ENCODE measurements at regions of chr5 and their contacts with region 1.

Region 1: GRCh38 chr5:132064738-132065331 is 4.4 kb downstream of the IL3 start:
- DNase-seq: peak; percentile 93
- ATAC-seq: peak; percentile 78
- H3K4me3 Mint-ChIP-seq: no peak overlapping the region
- H3K27ac Mint-ChIP-seq: peak overlapping the region; percentile 6
- H3K4me1 Mint-ChIP-seq: peaks cover 34% of the 10 kb centered on the region
- H3K27me3 Mint-ChIP-seq: no peaks in the 10 kb centered on the region
- CTCF ChIP-seq: peak; percentile 92

Region 2: GRCh38 chr5:131810510-131811249 is 254.2 kb before region 1 on chr5:
- CTCF ChIA-PET with region 1: interaction called, 15 read pairs
- POLR2A ChIA-PET with region 1: interaction called, 3 read pairs
- intact Hi-C with region 1: no loop called
- DNase-seq: peak; percentile 28
- ATAC-seq: no peak
- H3K4me3 Mint-ChIP-seq: no peak overlapping the region
- H3K27ac Mint-ChIP-seq: no peak overlapping the region
- H3K4me1 Mint-ChIP-seq: no peaks in the 10 kb centered on the region
- H3K27me3 Mint-ChIP-seq: no peaks in the 10 kb centered on the region
- CTCF ChIP-seq: peak; percentile 22

Region 3: GRCh38 chr5:131926168-131926567 is 138.7 kb before region 1 on chr5:
- CTCF ChIA-PET with region 1: no interaction called
- POLR2A ChIA-PET with region 1: no interaction called
- intact Hi-C with region 1: no loop called
- DNase-seq: no peak
- ATAC-seq: no peak
- H3K4me3 Mint-ChIP-seq: no peak overlapping the region
- H3K27ac Mint-ChIP-seq: no peak overlapping the region
- H3K4me1 Mint-ChIP-seq: no peaks in the 10 kb centered on the region
- H3K27me3 Mint-ChIP-seq: no peaks in the 10 kb centered on the region
- CTCF ChIP-seq: no peak

Region 4: DNA sequence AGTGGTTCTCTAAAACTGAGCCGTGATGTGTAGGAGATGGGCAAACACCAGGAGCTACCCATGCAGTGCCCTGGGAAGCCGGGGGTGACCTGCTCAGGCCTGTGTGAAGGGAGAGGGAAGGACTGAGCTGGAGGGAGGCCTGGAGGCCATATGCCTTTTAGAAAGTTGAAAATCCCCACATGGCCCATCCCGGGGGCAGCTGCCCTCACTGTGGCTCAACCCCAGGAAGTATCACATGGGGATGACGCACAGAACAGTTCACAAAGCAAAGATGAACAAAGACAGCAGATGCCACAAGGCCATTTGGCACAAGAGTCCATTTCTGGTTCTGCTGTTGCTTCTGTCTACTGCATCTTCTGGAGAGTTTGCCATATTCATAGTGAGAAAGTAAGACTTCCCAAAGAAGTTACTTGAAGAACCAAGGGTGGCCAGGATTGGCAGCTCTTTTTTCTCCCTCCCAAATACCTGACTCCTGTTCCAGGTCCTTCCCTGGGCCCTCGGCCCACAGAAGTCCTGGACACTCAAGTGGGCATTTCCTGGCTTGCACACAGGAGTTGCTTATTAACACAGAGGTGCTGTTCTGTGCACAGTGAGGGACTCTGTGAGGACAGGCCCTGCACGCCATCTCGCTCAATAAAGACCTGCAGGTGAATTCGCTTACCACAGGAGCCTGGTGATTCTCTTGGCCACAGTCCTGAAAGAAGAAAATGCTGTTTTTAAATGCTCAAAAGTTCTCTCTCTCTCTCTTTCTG is 78.5 kb before region 1 on chr5:
- CTCF ChIA-PET with region 1: no interaction called
- POLR2A ChIA-PET with region 1: no interaction called
- intact Hi-C with region 1: no loop called
- DNase-seq: no peak
- ATAC-seq: no peak
- H3K4me3 Mint-ChIP-seq: no peak overlapping the region
- H3K27ac Mint-ChIP-seq: no peak overlapping the region
- H3K4me1 Mint-ChIP-seq: peaks cover 8% of the 10 kb centered on the region
- H3K27me3 Mint-ChIP-seq: no peaks in the 10 kb centered on the region
- CTCF ChIP-seq: no peak

Region 5: DNA sequence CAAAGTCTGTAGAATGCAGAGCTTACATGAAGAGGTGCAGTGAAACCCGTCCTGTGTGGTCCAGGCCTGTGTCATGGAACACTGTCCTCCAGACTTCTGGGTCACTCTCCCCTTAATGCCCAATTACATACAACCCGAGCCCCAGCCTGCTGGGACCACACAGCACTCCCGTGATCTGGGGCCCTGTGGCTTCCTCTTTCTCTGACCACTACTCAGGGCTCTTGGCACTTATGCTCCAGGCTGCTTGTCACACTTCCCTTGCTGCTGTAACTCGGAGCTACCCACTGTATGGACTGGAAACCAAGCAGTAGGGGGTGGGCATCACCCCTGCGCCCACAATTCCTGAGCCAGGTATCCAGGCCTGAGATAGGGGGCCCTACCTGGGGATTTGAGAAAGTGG is 14.7 kb before region 1 on chr5:
- CTCF ChIA-PET with region 1: interaction called, 18 read pairs
- POLR2A ChIA-PET with region 1: no interaction called
- intact Hi-C with region 1: no loop called
- DNase-seq: no peak
- ATAC-seq: no peak
- H3K4me3 Mint-ChIP-seq: no peak overlapping the region
- H3K27ac Mint-ChIP-seq: no peak overlapping the region
- H3K4me1 Mint-ChIP-seq: no peaks in the 10 kb centered on the region
- H3K27me3 Mint-ChIP-seq: no peaks in the 10 kb centered on the region
- CTCF ChIP-seq: no peak

Region 6: GRCh38 chr5:132293066-132293991 is 228.5 kb after region 1 on chr5:
- CTCF ChIA-PET with region 1: interaction called, 15 read pairs
- POLR2A ChIA-PET with region 1: no interaction called
- intact Hi-C with region 1: no loop called
- DNase-seq: peak; percentile 92
- ATAC-seq: peak; percentile 54
- H3K4me3 Mint-ChIP-seq: peak overlapping the region; percentile 87
- H3K27ac Mint-ChIP-seq: peak overlapping the region; percentile 95
- H3K4me1 Mint-ChIP-seq: peaks cover 21% of the 10 kb centered on the region
- H3K27me3 Mint-ChIP-seq: peaks cover 8% of the 10 kb centered on the region
- CTCF ChIP-seq: no peak

Region 7: DNA sequence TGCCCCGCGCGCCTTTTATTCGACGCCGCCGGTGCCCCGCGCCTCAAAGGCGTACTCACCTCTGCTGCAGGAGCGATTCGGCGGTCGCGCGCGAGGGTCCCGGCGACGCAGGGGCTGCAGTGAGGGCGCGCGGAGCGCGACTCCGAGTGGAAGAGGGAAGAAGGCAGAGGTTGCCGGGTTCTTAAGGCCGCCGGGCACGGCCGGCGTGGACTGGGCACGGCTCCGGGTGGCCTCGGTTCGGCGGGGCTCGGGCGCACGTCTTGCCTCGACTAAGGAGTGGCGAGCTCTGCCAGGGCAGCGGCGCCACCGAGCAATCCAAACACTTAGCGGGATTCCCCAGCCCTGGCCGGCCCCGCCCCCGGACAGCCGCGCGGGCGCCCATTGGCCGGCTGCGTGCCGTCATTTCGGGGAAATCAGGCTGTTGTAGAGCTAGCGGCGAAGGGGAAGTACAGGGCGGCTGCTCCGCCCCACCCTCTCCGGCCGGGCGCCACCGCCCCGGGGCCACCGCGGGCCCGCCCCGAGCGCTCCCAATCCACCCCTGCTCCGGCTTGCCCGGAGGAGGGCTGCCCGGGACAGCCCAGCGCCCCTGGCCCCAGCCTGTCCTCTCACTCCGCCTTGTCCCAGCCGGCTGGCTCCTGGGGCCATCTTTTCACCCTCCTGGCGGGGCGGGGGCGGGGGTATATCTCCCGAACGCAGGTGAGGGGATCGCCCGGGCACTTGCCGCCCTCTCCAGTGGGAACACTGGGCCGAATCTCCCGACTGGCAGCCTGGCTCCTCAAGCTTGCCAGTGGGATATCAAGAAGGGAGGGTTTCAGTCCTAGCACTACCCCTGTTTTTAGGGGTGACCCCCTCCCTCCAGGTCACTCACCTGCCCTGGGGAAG is 425.9 kb after region 1 on chr5 and contains the start of gene IRF1:
- CTCF ChIA-PET with region 1: no interaction called
- POLR2A ChIA-PET with region 1: no interaction called
- intact Hi-C with region 1: no loop called
- DNase-seq: peak; percentile 97
- ATAC-seq: peak; percentile 68
- H3K4me3 Mint-ChIP-seq: peak within 1 kb of the TSS; percentile 96
- H3K27ac Mint-ChIP-seq: peak within 1 kb of the TSS; percentile 99
- H3K4me1 Mint-ChIP-seq: peaks cover 62% of the 10 kb centered on the region
- H3K27me3 Mint-ChIP-seq: no peaks in the 10 kb centered on the region
- CTCF ChIP-seq: no peak
- total RNA-seq, gene IRF1: 121 to 128 TPM